Activated CD4-positive, alpha-beta memory T cell treated with anti-CD3 and anti-CD28 coated beads for 36 hours (primary cell): ENCODE measurements at regions of chr1 and their contacts with region 1.

Region 1: DNA sequence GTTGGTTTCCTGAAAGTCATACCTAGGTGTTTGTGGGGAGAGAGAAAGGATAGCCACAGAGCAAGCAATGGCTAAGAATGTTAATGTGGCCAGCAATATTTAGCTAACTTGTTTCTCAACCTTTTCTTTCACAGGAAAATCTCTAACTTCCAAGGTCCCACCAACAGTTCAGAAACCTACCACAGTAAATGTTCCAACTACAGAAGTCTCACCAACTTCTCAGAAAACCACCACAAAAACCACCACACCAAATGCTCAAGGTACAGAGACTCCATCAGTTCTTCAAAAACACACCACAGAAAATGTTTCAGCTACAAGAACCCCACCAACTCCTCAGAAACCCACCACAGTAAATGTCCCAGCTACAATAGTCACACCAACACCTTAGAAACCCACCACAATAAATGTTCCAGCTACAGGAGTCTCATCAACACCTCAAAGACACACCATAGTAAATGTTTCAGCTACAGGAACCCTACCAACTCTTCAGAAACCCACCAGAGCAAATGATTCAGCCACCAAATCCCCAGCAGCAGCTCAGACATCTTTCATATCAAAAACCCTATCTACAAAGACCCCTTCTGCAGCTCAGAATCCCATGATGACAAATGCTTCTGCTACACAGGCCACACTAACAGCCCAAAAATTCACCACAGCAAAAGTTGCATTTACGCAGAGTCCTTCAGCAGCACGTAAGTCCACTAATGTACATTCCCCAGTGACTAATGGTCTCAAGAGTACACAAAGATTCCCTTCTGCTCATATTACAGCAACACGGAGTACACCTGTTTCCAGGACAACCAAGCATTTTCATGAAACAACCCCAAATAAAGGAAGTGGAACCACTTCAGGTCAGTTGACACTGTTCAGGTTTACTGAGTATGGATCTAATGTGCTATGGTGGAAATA is 15.3 kb downstream of the CD55 start:
- DNase-seq: peak; percentile 39
- H3K4me3 Mint-ChIP-seq: no peak overlapping the region
- H3K27ac Mint-ChIP-seq: peak overlapping the region; percentile 86
- H3K4me1 Mint-ChIP-seq: peaks cover 58% of the 10 kb centered on the region
- H3K27me3 Mint-ChIP-seq: no peaks in the 10 kb centered on the region

Region 2: GRCh38 chr1:207389740-207390464 is 53.1 kb after region 1 on chr1:
- CTCF ChIA-PET with region 1: interaction called, 4 read pairs
- POLR2A ChIA-PET with region 1: interaction called, 5 read pairs
- intact Hi-C with region 1: loop called (anchors 1 kb)
- DNase-seq: no peak
- H3K4me3 Mint-ChIP-seq: no peak overlapping the region
- H3K27ac Mint-ChIP-seq: peak overlapping the region; percentile 30
- H3K4me1 Mint-ChIP-seq: peaks cover 7% of the 10 kb centered on the region
- H3K27me3 Mint-ChIP-seq: peaks cover 12% of the 10 kb centered on the region

Region 3: GRCh38 chr1:207414606-207415108 is 77.8 kb after region 1 on chr1:
- CTCF ChIA-PET with region 1: no interaction called
- POLR2A ChIA-PET with region 1: no interaction called
- intact Hi-C with region 1: no loop called
- DNase-seq: peak; percentile 63
- H3K4me3 Mint-ChIP-seq: no peak overlapping the region
- H3K27ac Mint-ChIP-seq: no peak overlapping the region
- H3K4me1 Mint-ChIP-seq: peaks cover 25% of the 10 kb centered on the region
- H3K27me3 Mint-ChIP-seq: peaks cover 3% of the 10 kb centered on the region